Aorta (tissue), 5 donors: ENCODE measurements at regions of chr10 and their contacts with region 1.

Region 1: DNA sequence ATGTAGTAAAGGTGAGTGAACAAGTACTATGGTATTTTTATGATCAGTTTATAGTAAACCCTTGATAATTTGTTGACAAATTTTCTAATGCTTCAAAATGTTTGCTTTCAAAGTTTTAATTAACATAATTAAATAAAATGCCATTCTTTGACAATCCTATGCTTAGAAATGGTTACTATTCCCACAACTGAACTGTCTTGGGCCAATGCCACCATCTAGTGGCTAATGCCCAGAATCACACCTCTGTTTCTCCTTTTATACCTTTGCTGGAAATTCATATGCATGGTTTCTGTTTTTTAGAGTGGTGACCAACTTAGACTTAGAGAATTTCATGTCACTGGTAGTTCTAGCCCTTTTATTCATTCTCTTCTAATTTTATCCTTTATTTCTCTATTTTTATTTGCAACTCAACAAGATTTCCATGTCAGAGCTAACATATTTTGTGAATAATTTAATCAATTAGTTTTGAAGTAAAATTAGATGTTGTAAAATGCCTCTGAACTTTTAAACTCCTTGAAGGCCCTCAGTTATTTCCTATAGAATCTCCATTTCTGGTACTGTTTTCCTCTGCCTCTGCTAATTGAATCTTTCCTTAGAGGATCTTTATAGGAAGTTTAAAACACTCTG is 31.1 kb downstream of the PCGF5 start:
- DNase-seq: no peak
- ATAC-seq: peak; percentile 87
- H3K4me3 ChIP-seq: no peak overlapping the region
- H3K27ac ChIP-seq: no peak overlapping the region
- H3K4me1 ChIP-seq: no peaks in the 10 kb centered on the region
- H3K27me3 ChIP-seq: no peaks in the 10 kb centered on the region

Region 2: DNA sequence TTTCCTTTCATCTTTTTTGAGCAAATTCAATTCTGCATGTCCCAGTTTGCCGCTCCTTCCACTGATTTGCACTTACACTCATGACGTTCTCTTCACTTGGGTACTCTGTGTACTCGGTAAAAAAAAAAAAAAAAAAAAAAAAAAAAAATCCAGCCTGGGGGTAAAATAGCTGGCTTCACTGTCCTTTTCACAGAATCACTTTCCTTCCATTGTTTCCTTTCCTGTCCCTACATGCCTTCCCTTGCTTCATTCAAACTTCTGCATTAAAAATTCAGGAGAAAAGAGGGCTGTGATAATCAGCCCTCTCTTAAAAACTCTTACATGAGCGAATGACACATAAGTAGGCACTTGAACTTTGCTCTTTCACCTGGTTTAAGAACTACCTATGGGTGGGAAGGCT is 339.4 kb before region 1 on chr10:
- intact Hi-C with region 1: loop called (anchors 5 kb)
- DNase-seq: no peak
- ATAC-seq: no peak
- H3K4me3 ChIP-seq: no peak overlapping the region
- H3K27ac ChIP-seq: no peak overlapping the region
- H3K4me1 ChIP-seq: no peaks in the 10 kb centered on the region
- H3K27me3 ChIP-seq: no peaks in the 10 kb centered on the region

Region 3: DNA sequence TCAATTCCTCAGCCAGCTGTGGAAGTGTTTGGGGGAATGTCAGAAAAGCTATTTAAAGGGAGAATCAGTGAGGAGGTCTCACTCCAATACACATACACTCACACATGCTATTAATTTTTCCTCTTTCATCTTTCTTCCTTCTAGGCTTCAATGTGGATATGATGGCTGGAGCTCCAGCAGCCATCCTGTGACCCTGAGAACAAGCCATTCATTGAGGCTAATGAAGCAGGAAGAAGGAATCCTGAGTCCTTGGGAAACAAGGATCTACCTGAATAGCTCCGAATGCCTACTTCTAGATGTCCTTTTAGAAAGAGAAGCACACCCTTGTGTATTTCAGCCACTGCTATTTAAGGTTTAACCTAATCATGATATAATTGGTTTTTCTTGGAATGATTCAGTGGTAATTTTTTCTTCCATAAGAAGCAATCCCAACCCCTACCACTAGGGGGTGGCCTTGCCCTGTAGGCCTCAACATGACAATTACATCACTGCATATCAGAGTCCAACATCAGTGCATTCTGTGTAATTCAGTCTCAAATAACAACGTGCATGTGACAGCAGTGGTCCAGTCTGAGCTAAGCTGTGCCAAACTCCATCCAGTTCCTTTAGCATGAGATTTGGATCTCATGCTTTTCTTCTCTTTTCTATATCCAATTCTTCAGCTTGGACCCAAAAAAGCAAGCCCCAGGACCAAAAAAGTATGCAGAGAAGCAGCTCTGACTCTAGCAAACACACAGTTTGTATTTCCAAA is 245.4 kb before region 1 on chr10:
- intact Hi-C with region 1: loop called (anchors 2 to 5 kb)
- DNase-seq: peak in 1 of 2 donors; percentile 58
- ATAC-seq: peak; percentile 90
- H3K4me3 ChIP-seq: no peak overlapping the region
- H3K27ac ChIP-seq: peak overlapping the region in 1 of 2 donors; percentile 44
- H3K4me1 ChIP-seq: no peaks in the 10 kb centered on the region
- H3K27me3 ChIP-seq: no peaks in the 10 kb centered on the region

Region 4: GRCh38 chr10:91043173-91043910 is 208.2 kb before region 1 on chr10:
- intact Hi-C with region 1: loop called (anchors 2 to 5 kb)
- DNase-seq: no peak
- ATAC-seq: peak; percentile 13
- H3K4me3 ChIP-seq: no peak overlapping the region
- H3K27ac ChIP-seq: no peak overlapping the region
- H3K4me1 ChIP-seq: peaks cover 0 to 8% of the 10 kb centered on the region in 2 donors
- H3K27me3 ChIP-seq: no peaks in the 10 kb centered on the region

Region 5: DNA sequence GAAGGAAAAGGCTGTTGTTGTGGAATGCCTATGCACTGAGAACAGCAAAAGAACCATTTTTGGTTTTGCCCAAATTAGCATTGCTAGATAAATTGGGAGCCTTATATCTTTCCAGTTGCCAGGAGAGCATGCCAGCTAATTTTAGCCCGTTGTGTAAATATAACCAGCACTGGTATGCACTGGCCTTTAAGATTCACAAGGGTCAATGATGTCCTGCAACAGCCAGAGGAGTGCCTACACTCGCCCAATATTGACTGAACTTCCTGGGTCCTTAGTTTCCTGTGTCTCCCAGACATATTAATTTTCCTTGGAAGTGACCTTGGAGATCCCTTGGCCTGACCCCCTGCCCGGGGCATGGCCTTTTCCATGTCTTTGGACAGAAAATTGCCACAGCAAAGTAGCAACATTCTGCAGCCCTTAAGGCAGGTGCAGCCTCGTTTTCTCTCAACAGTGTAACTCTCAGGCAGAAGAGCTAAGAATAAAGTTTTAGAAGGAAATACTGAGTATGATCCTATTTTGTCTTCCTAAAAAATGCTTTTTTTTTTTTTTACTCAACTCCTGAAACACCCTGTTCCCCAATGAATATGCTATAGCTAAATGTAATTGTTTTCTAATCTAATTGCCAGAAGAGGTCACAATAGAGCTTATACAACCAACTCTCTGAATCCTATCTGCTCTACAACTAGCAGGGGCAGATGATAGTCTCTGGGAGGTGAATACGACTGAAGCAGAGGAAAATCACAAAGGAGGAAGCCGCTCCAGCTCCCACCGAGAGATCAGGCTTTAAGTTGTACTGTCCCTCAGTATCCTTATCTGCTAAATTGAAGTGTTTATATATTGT is 163.0 kb before region 1 on chr10:
- intact Hi-C with region 1: loop called in 1 of 2 experiments (anchors 5 kb)
- DNase-seq: peak in 1 of 2 donors; percentile 47
- ATAC-seq: peak; percentile 76
- H3K4me3 ChIP-seq: no peak overlapping the region
- H3K27ac ChIP-seq: peak overlapping the region; percentile 61 to 76
- H3K4me1 ChIP-seq: peaks cover 0 to 3% of the 10 kb centered on the region in 2 donors
- H3K27me3 ChIP-seq: no peaks in the 10 kb centered on the region

Region 6: GRCh38 chr10:91163269-91163868 is 88.2 kb before region 1 on chr10:
- intact Hi-C with region 1: loop called in 1 of 2 experiments (anchors 5 kb)
- DNase-seq: peak; percentile 78 to 90
- ATAC-seq: peak; percentile 70
- H3K4me3 ChIP-seq: peak overlapping the region; percentile 97 to 98
- H3K27ac ChIP-seq: peak overlapping the region; percentile 73 to 97
- H3K4me1 ChIP-seq: peaks cover 3 to 7% of the 10 kb centered on the region in 2 donors
- H3K27me3 ChIP-seq: no peaks in the 10 kb centered on the region

Region 7: DNA sequence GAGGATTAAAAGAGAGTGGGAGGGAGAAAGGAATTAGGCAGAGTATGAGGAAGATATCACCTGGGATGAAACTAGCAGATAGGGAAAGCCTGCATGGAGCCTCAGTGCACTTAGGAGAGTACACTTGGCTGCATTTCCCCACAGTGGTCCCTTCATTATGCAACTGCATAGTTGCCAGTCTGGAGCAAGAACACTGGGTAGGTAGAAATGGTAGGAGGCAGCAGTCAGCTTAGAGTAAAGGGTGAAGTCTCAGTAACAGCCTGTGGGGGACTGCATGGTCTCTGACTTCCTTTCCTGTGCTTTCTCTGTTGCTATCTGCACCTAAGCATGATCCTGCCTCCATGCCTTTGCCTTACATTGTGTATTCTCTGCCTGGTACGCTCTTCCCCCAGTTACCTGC is 45.1 kb before region 1 on chr10:
- intact Hi-C with region 1: no loop called
- DNase-seq: no peak
- ATAC-seq: no peak
- H3K4me3 ChIP-seq: no peak overlapping the region
- H3K27ac ChIP-seq: peak overlapping the region in 1 of 2 donors; percentile 6
- H3K4me1 ChIP-seq: peaks cover 3 to 12% of the 10 kb centered on the region in 2 donors
- H3K27me3 ChIP-seq: no peaks in the 10 kb centered on the region

Region 8: DNA sequence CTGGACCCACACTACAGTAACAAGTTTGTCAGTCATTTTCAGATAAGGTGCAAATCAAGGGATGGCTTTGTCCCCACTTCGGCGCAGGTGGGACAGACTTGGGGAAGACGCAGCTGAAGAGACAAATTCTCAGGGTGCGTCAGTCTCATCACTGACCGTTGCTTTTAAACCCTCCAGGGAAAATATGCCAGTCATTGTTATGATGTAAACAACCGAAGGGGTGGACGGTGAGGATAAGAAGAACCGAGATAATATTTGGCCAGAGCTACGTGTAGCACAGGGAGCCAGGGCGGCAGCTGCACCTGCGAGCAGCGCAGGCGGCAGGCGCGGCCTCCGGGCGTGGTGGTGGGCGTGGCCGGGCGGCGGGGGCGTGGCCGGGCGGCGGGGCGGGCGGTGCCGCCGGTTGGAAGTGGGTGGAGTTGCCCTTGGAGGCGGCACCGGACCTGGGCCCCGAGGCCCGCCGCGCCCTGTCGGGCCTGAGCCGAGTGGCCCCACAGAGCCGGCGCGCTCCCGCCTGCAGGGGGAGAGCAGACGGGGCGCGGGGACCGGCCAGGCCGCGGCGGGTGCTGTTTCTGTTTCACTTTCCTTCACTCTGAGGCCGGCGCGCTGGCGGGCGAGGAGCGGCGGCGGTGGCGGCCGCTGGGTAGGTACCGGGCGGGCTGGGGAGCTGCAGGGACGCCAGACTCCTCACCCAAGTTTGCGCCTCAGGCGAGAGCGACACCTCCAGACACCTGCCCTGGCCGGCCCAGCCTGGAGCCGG is 31.2 kb before region 1 on chr10 and contains the start of gene PCGF5:
- intact Hi-C with region 1: no loop called
- DNase-seq: peak; percentile 95 to 96
- ATAC-seq: peak; percentile 98
- H3K4me3 ChIP-seq: peak within 1 kb of the TSS; percentile 67 to 84
- H3K27ac ChIP-seq: peak within 1 kb of the TSS; percentile 83 to 85
- H3K4me1 ChIP-seq: peaks cover 4 to 8% of the 10 kb centered on the region in 2 donors
- H3K27me3 ChIP-seq: no peaks in the 10 kb centered on the region
- total RNA-seq, gene PCGF5: 77.7 to 145 TPM